CD14-positive monocyte (primary cell): ENCODE measurements at regions of chr14 and their contacts with region 1.

Region 1: DNA sequence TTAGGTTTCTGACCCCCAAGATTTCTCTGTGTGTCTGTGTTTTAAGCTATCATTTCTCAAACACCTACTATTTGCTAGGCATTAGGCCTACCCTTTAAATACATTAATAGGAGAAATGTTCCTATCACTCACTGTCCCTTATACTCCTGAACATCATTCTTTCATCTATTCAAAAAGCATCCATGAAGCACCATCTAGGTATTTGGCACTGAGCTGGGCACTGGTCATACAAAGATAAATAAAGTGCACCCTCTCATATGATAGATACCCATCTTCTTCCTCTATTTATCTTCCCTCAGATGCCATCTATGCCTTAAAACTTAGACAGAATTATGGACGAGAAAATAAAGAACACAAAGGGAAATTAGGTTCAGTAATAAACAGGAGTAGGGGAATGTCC is 20.4 kb downstream of the SIX1 start:
- DNase-seq: no peak
- H3K4me3 ChIP-seq: no peak overlapping the region
- H3K4me3 Mint-ChIP-seq: peak overlapping the region in 1 of 2 donors; percentile 15
- H3K27ac ChIP-seq: no peak overlapping the region
- H3K27ac Mint-ChIP-seq: no peak overlapping the region
- H3K4me1 ChIP-seq: no peaks in the 10 kb centered on the region
- H3K4me1 Mint-ChIP-seq: no peaks in the 10 kb centered on the region
- H3K27me3 ChIP-seq: peaks cover 51 to 55% of the 10 kb centered on the region in 2 donors
- H3K27me3 Mint-ChIP-seq: peaks cover 29 to 66% (median 43%) of the 10 kb centered on the region in 3 donors
- CTCF ChIP-seq: no peak

Region 2: DNA sequence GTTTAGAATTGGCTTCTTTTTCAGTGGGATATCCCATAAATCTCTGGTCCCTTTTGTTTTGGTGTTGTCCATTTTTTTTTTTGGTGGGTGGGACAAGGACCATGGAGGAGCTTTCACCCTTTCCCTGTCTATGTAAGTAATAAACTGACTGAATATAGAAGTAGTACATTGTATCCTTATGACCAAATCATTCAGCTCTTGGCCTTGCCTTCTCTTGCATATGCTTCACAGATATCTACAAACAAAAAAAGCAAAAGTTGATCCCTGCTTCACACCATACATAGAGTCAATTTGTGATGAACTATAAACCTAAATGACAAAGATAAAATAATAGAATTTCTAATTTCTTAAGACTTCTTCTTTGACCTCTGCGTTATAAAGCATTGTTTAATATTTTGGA is 39.5 kb before region 1 on chr14:
- intact Hi-C with region 1: no loop called
- DNase-seq: no peak
- H3K4me3 ChIP-seq: no peak overlapping the region
- H3K4me3 Mint-ChIP-seq: no peak overlapping the region
- H3K27ac ChIP-seq: no peak overlapping the region
- H3K27ac Mint-ChIP-seq: no peak overlapping the region
- H3K4me1 ChIP-seq: no peaks in the 10 kb centered on the region
- H3K4me1 Mint-ChIP-seq: no peaks in the 10 kb centered on the region
- H3K27me3 ChIP-seq: peaks cover 0 to 2% of the 10 kb centered on the region in 2 donors
- H3K27me3 Mint-ChIP-seq: peaks cover 0 to 15% (median 7%) of the 10 kb centered on the region in 3 donors
- CTCF ChIP-seq: no peak

Region 3: GRCh38 chr14:60647081-60647836 is 18.4 kb after region 1 on chr14:
- intact Hi-C with region 1: no loop called
- DNase-seq: peak; percentile 14 to 35 (median 16)
- H3K4me3 ChIP-seq: peak overlapping the region in 1 of 3 experiments; percentile 68
- H3K4me3 Mint-ChIP-seq: peak overlapping the region; percentile 78 to 96
- H3K27ac ChIP-seq: no peak overlapping the region
- H3K27ac Mint-ChIP-seq: no peak overlapping the region
- H3K4me1 ChIP-seq: peaks cover 28 to 42% of the 10 kb centered on the region in 2 donors
- H3K4me1 Mint-ChIP-seq: peaks cover 49% of the 10 kb centered on the region
- H3K27me3 ChIP-seq: peaks cover 84 to 100% of the 10 kb centered on the region in 2 donors
- H3K27me3 Mint-ChIP-seq: peaks cover 96 to 98% (median 97%) of the 10 kb centered on the region in 3 donors
- CTCF ChIP-seq: no peak

Region 4: GRCh38 chr14:60800409-60800808 is 171.5 kb after region 1 on chr14:
- intact Hi-C with region 1: no loop called
- DNase-seq: no peak
- H3K4me3 ChIP-seq: no peak overlapping the region
- H3K4me3 Mint-ChIP-seq: no peak overlapping the region
- H3K27ac ChIP-seq: no peak overlapping the region
- H3K27ac Mint-ChIP-seq: no peak overlapping the region
- H3K4me1 ChIP-seq: no peaks in the 10 kb centered on the region
- H3K4me1 Mint-ChIP-seq: no peaks in the 10 kb centered on the region
- H3K27me3 ChIP-seq: no peaks in the 10 kb centered on the region
- H3K27me3 Mint-ChIP-seq: peaks cover 0 to 2% (median 2%) of the 10 kb centered on the region in 3 donors
- CTCF ChIP-seq: no peak

Region 5: DNA sequence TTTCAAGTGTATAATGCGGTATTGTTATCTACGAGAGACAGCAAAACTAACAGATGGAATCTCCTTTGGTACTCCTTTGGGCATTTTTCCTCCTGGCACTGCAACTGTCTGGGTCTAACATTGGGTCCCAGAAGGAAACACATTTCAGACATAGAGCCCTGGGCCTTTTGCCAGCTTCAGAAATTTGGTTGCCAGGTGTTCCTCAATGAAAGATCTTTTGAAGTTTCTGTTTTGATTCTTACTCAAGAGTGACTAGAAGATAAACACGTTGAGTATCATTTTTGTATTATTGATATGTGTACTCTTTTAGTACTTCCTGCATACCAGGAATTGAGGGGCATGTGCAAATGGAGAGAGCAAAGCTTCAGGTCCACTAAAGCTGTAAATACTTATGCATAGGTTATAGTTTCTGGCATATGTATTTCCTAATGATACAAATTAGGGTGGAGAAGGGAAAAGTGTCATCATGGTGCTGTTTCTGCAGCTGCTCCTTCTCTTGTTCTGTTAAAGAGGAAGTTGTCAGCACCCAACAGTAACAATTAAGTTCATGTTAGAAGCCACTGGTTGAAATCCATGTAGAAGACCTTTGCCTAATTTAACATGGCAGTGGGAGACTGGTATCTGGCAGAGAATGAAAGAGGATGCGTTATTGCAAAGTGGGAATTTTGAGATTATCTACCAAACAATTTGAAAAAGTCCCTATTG is 405.7 kb after region 1 on chr14:
- intact Hi-C with region 1: no loop called
- DNase-seq: peak in 2 of 3 donors; percentile 7 to 22
- H3K4me3 ChIP-seq: no peak overlapping the region
- H3K4me3 Mint-ChIP-seq: no peak overlapping the region
- H3K27ac ChIP-seq: peak overlapping the region in 1 of 2 donors; percentile 43
- H3K27ac Mint-ChIP-seq: peak overlapping the region in 2 of 7 donors; percentile 5 to 10
- H3K4me1 ChIP-seq: peaks cover 9 to 11% of the 10 kb centered on the region in 2 donors
- H3K4me1 Mint-ChIP-seq: peaks cover 11% of the 10 kb centered on the region
- H3K27me3 ChIP-seq: no peaks in the 10 kb centered on the region
- H3K27me3 Mint-ChIP-seq: no peaks in the 10 kb centered on the region
- CTCF ChIP-seq: no peak

Region 6: GRCh38 chr14:61258985-61259384 is 630.1 kb after region 1 on chr14:
- intact Hi-C with region 1: loop called in 1 of 2 experiments (anchors 5 kb)
- DNase-seq: no peak
- H3K4me3 ChIP-seq: no peak overlapping the region
- H3K4me3 Mint-ChIP-seq: no peak overlapping the region
- H3K27ac ChIP-seq: no peak overlapping the region
- H3K27ac Mint-ChIP-seq: no peak overlapping the region
- H3K4me1 ChIP-seq: peaks cover 3 to 4% of the 10 kb centered on the region in 2 donors
- H3K4me1 Mint-ChIP-seq: peaks cover 5% of the 10 kb centered on the region
- H3K27me3 ChIP-seq: peaks cover 0 to under 1% of the 10 kb centered on the region in 2 donors
- H3K27me3 Mint-ChIP-seq: peaks cover 2 to 7% (median 3%) of the 10 kb centered on the region in 3 donors
- CTCF ChIP-seq: no peak